Mammary epithelial cell (primary cell): ENCODE measurements at regions of chr11 and their contacts with region 1.

Region 1: DNA sequence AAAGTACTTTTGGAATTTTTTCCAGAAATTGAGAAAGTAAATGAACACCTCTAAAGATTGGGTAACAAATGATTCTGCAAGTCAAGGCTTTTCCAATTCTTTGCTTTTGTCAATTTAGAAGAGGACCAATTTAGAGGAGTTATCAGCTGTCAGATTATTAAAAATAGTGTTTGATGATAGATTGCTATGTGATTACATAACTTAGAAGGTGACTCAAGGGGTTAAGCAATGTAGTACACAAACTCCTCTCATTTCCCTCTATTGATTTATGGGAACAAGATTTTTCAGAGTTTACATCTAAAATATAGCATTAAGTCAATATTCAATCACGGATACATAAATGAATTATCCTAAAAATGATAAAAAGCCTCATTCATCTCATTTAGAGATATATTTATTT is 70.3 kb downstream of the INSC start:
- DNase-seq: no peak
- H3K4me3 ChIP-seq: no peak overlapping the region
- H3K27ac ChIP-seq: no peak overlapping the region
- H3K4me1 ChIP-seq: no peaks in the 10 kb centered on the region
- H3K27me3 ChIP-seq: no peaks in the 10 kb centered on the region
- CTCF ChIP-seq: no peak

Region 2: DNA sequence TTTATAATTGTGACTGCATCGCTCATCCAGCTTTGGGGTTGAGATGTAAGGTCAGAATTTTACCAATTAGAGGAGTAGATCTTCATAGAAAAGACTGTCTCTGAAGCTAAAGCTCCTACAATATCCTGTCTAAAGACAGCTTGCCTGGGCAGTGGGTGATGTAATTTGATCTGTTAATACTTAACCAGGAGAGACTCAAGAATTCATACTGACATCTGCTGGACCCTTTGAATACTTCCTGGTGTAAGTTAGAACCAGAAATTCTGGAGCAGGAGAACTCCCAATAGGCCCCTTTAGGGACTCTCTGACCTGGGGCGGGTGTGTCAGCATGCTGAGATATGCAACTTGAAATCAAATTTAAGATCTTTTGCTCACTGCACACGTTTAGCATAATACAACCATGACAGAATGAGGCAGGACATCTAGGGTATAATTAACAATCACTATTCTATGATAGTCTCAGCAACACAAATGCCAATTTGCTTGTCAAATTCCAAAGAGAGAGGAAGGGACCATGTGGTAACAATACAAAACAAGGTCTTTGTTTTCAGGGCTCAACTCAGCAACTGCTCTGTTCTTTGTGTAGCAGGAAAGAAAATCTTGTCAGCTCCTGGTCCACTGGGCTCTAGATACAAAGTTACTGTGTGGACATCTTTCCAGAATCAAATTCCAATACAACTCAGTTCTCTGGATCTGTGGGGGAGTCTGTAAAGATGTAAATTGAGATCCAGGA is 73.6 kb after region 1 on chr11:
- CTCF ChIA-PET with region 1: no interaction called
- dilution Hi-C with region 1: no loop called
- in situ Hi-C with region 1: no loop called
- intact Hi-C with region 1: loop called (anchors 2 kb)
- DNase-seq: peak; percentile 5
- H3K4me3 ChIP-seq: no peak overlapping the region
- H3K27ac ChIP-seq: no peak overlapping the region
- H3K4me1 ChIP-seq: no peaks in the 10 kb centered on the region
- H3K27me3 ChIP-seq: peaks cover 3% of the 10 kb centered on the region
- CTCF ChIP-seq: peak in 1 of 2 donors; percentile 9